HAP-1 (cell line): ENCODE measurements at regions of chr7 and their contacts with region 1.

Region 1: GRCh38 chr7:4797858-4798705 is 22.7 kb downstream of the AP5Z1 start:
- DNase-seq: peak; percentile 45 to 82
- H3K4me3 ChIP-seq: no peak overlapping the region
- H3K4me1 ChIP-seq: no peaks in the 10 kb centered on the region
- H3K27me3 ChIP-seq: no peaks in the 10 kb centered on the region

Region 2: DNA sequence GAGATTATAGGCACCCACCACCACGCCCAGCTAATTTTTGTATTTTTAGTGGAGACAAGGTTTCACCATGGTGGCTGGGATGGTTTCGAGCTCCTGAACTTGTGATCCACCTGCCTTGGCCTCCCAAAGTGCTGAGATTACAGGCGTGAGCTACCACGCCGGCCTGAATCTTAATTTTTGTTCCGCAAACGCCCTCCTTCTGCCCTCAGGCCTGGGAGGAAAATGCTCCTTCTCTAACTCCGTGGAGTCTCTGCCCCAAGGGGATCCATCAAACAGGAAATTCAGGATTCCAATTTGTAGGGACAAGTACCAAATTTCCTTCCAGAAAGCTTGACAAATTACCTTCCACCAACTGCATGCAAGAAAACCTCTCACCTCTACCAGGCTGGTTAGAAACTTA is 290.8 kb after region 1 on chr7:
- in situ Hi-C with region 1: loop called (anchors 5 kb)
- DNase-seq: no peak
- H3K4me3 ChIP-seq: no peak overlapping the region
- H3K4me1 ChIP-seq: no peaks in the 10 kb centered on the region
- H3K27me3 ChIP-seq: no peaks in the 10 kb centered on the region

Region 3: DNA sequence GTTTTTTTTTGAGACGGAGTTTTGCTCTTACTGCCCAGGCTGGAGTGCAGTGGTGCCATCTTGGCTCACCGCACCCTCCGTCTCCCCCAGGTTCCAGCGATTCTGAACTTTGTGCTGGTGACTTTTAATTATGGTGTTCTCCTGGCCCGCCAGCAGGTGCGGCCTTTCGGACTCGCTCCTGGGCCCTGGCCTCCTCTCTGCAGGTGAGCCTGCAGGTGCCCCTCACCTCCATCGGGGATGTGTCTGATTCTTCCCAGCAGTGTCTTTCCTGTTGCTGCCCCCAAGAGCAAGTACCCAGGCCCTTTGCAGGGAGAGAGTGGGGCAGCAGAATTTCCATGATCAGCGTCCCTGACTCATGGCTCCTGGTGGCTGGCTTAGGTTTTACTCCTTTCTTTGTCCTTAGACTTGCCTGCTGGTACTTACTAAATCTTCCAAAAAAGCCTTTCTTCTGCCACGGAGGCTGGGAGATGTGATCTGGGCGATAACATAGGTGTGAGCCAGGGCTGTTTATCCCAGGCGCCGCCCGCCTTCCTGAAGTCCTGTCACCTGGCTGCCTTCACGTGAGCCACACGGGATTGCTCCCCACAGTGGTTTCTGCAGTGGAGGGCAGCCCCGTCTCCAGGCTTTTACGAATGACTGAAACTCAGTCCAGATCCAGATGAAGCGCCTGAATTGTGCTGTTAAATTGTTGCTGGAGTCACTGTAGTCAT is 402.6 kb after region 1 on chr7:
- in situ Hi-C with region 1: no loop called
- DNase-seq: no peak
- H3K4me3 ChIP-seq: no peak overlapping the region
- H3K4me1 ChIP-seq: no peaks in the 10 kb centered on the region; the same call in 1 of the 2 replicates
- H3K27me3 ChIP-seq: no peaks in the 10 kb centered on the region